T-cell (primary cell): ENCODE measurements at regions of chr1 and their contacts with region 1.

Region 1: DNA sequence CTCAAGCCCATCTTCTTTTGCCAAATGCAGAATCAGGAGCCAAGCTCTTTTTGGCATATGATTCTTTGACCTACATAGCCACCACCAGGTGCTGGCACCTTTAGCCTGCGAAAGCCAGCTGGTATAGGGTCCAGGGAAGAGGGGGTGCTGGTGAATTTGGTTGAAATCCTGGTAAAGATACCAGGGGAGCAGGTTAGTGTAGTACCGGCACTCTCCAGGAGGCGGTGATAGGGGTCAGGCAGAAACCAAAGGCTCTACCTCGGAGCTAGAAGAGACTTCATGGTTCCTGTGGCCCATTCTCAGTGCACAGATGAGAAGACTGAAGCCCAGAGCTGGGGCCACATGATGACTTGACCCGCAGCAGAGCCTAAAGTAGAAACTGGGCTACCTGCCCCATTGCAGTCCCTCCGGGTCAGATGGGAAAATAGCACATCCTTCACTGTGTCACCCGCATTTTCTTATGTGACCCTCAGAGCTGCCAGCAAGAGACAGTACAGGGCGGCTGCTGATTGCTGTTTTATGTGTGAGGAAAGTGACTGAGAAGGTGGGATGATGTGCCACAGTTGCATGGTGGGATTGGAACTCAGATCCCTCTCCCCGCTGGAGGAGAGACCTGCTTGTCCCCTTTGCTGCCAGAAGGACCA is 36.0 kb upstream of the IL19 start:
- DNase-seq: peak; percentile 46 to 89 (median 75)
- ATAC-seq: peak; percentile 60 to 78 (median 69)
- H3K4me3 ChIP-seq: no peak overlapping the region
- H3K4me3 Mint-ChIP-seq: peak overlapping the region in 1 of 3 donors; percentile 21
- H3K27ac ChIP-seq: peak overlapping the region; percentile 89
- H3K27ac Mint-ChIP-seq: peak overlapping the region; percentile 66 to 91
- H3K4me1 ChIP-seq: peaks cover 41 to 56% of the 10 kb centered on the region in 2 experiments
- H3K4me1 Mint-ChIP-seq: peaks cover 56 to 62% (median 57%) of the 10 kb centered on the region in 3 donors
- H3K27me3 ChIP-seq: no peaks in the 10 kb centered on the region
- H3K27me3 Mint-ChIP-seq: no peaks in the 10 kb centered on the region

Region 2: GRCh38 chr1:206445116-206445515 is 289.5 kb before region 1 on chr1:
- CTCF ChIA-PET with region 1: no interaction called
- POLR2A ChIA-PET with region 1: no interaction called
- DNase-seq: no peak
- ATAC-seq: no peak
- H3K4me3 ChIP-seq: no peak overlapping the region
- H3K4me3 Mint-ChIP-seq: no peak overlapping the region
- H3K27ac ChIP-seq: no peak overlapping the region
- H3K27ac Mint-ChIP-seq: no peak overlapping the region
- H3K4me1 ChIP-seq: no peaks in the 10 kb centered on the region
- H3K4me1 Mint-ChIP-seq: no peaks in the 10 kb centered on the region
- H3K27me3 ChIP-seq: no peaks in the 10 kb centered on the region
- H3K27me3 Mint-ChIP-seq: no peaks in the 10 kb centered on the region

Region 3: GRCh38 chr1:206766251-206766856 is 31.7 kb after region 1 on chr1:
- CTCF ChIA-PET with region 1: interaction called, 3 to 16 read pairs
- POLR2A ChIA-PET with region 1: interaction called, 4 read pairs
- DNase-seq: peak; percentile 39 to 85 (median 66)
- ATAC-seq: peak; percentile 81 to 85 (median 84)
- H3K4me3 ChIP-seq: peak overlapping the region in 1 of 2 donors; percentile 6
- H3K4me3 Mint-ChIP-seq: peak overlapping the region; percentile 41 to 65 (median 58)
- H3K27ac ChIP-seq: no peak overlapping the region
- H3K27ac Mint-ChIP-seq: peak overlapping the region; percentile 2 to 40
- H3K4me1 ChIP-seq: peaks cover 38 to 61% of the 10 kb centered on the region in 2 experiments
- H3K4me1 Mint-ChIP-seq: peaks cover 64 to 75% (median 69%) of the 10 kb centered on the region in 3 donors
- H3K27me3 ChIP-seq: peaks cover 0 to 2% of the 10 kb centered on the region in 2 experiments
- H3K27me3 Mint-ChIP-seq: no peaks in the 10 kb centered on the region

Region 4: GRCh38 chr1:206808615-206809014 is 74.0 kb after region 1 on chr1:
- CTCF ChIA-PET with region 1: interaction called, 45 to 140 read pairs
- POLR2A ChIA-PET with region 1: interaction called, 3 to 4 read pairs
- DNase-seq: peak in 30 of 35 experiments; percentile 14 to 82 (median 46)
- ATAC-seq: peak; percentile 78 to 84 (median 82)
- H3K4me3 ChIP-seq: no peak overlapping the region
- H3K4me3 Mint-ChIP-seq: peak overlapping the region in 1 of 3 donors; percentile 18
- H3K27ac ChIP-seq: no peak overlapping the region
- H3K27ac Mint-ChIP-seq: no peak overlapping the region
- H3K4me1 ChIP-seq: peaks cover 10 to 23% of the 10 kb centered on the region in 2 experiments
- H3K4me1 Mint-ChIP-seq: peaks cover 37 to 56% (median 53%) of the 10 kb centered on the region in 3 donors
- H3K27me3 ChIP-seq: no peaks in the 10 kb centered on the region
- H3K27me3 Mint-ChIP-seq: peaks cover 0 to 1% of the 10 kb centered on the region in 2 donors

Region 5: GRCh38 chr1:206930210-206930798 is 195.7 kb after region 1 on chr1:
- CTCF ChIA-PET with region 1: interaction called, 10 read pairs
- POLR2A ChIA-PET with region 1: no interaction called
- DNase-seq: peak in 4 of 35 experiments; percentile 22 to 38 (median 26)
- ATAC-seq: peak; percentile 17 to 50 (median 28)
- H3K4me3 ChIP-seq: no peak overlapping the region
- H3K4me3 Mint-ChIP-seq: peak overlapping the region; percentile 9 to 65 (median 24)
- H3K27ac ChIP-seq: peak overlapping the region; percentile 65
- H3K27ac Mint-ChIP-seq: peak overlapping the region; percentile 81 to 93
- H3K4me1 ChIP-seq: peaks cover 8 to 52% of the 10 kb centered on the region in 2 experiments
- H3K4me1 Mint-ChIP-seq: peaks cover 54 to 62% (median 61%) of the 10 kb centered on the region in 3 donors
- H3K27me3 ChIP-seq: no peaks in the 10 kb centered on the region
- H3K27me3 Mint-ChIP-seq: no peaks in the 10 kb centered on the region

Region 6: DNA sequence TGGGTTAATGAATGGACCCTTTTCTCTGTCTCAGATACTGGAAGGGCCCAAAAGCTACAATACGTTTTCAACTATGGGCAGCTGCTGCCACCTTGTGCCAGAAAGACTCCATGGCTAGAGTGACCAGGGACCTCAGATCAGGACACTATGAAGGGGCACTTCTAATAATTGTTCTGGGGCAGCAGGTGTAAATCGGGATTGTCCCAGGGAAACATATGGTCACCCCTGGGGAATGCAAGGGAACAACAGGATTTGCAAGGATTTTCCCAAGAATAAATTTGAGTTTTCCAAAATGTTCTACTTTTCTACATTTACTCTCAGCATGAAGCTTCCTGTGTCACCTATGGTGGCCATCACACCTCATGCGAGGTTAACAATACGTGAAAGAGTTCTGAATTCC is 247.6 kb after region 1 on chr1:
- CTCF ChIA-PET with region 1: interaction called in 1 of 2 experiments, 19 read pairs
- POLR2A ChIA-PET with region 1: no interaction called
- DNase-seq: peak; percentile 16 to 75 (median 53)
- ATAC-seq: peak; percentile 71 to 85 (median 80)
- H3K4me3 ChIP-seq: no peak overlapping the region
- H3K4me3 Mint-ChIP-seq: no peak overlapping the region
- H3K27ac ChIP-seq: no peak overlapping the region
- H3K27ac Mint-ChIP-seq: no peak overlapping the region
- H3K4me1 ChIP-seq: no peaks in the 10 kb centered on the region
- H3K4me1 Mint-ChIP-seq: no peaks in the 10 kb centered on the region
- H3K27me3 ChIP-seq: peaks cover 0 to 10% of the 10 kb centered on the region in 2 experiments
- H3K27me3 Mint-ChIP-seq: peaks cover 12 to 29% of the 10 kb centered on the region in 2 donors